Common myeloid progenitor, CD34-positive (primary cell): ENCODE measurements at regions of chr20 and their contacts with region 1.

Region 1: DNA sequence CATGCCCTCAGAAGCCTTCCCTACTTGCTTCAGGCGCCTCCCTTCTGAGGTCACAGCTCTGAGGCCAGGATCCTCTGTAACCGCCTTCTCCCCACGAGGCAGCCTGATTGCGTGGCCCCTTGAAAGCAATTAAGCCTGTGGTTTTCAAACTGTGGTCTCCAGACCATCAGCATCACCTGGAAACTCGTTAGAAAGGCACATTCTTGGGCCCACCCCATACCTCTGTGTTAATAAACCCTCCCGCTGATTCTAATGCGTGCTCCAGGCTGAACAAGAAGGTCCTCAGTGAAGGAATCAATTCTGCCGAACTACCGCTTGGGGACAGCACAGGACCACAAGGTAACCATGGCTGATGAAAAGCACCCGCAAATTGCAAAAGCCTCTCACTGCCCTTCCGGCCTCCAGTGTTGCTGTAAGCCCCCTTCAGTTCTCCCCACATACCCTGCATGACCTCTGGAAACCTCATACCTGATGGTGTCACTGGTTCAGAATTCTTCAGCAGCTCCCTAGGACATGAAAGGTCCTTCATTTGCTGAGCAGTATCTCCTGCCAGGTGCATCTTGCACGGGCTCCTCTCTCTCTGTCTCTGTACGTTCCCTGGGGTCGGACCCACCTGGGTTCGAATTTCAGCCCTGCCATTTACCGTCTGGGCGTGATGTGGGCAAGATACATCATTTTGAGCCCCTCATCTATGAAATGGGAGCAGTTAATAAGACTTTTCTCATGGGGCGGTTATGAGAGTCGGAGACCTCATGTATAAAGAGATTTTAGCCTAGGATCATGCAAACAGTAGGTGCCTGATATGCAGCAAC is 93.3 kb upstream of the RNF24 start:
- DNase-seq: peak; percentile 85 to 93 (median 91)
- H3K4me3 ChIP-seq: no peak overlapping the region
- H3K27ac ChIP-seq: no peak overlapping the region
- H3K4me1 ChIP-seq: peaks cover under 1 to 28% (median 22%) of the 10 kb centered on the region in 4 experiments
- H3K27me3 ChIP-seq: no peaks in the 10 kb centered on the region

Region 2: DNA sequence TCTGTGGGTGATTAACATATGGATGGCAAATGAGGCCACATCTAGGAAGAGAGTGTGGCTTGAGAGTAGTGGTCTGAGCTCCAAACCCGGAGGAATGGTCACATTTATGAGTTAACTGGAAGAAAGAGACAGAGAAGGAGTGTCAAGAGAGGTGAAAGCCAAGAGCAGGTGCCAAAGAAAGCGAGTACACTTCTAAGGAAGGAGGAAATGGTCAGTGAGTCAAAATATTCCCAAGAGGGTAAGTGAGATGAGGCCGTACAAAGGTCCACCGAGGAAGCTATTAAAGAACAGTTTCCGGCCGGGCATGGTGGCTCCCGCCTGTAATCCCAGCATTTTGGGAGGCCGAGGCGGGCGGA is 11.1 kb after region 1 on chr20:
- CTCF ChIA-PET with region 1: interaction called, 11 read pairs
- POLR2A ChIA-PET with region 1: no interaction called
- DNase-seq: no peak
- H3K4me3 ChIP-seq: no peak overlapping the region
- H3K27ac ChIP-seq: no peak overlapping the region
- H3K4me1 ChIP-seq: peaks cover 0 to 21% (median 9%) of the 10 kb centered on the region in 4 experiments
- H3K27me3 ChIP-seq: no peaks in the 10 kb centered on the region

Region 3: DNA sequence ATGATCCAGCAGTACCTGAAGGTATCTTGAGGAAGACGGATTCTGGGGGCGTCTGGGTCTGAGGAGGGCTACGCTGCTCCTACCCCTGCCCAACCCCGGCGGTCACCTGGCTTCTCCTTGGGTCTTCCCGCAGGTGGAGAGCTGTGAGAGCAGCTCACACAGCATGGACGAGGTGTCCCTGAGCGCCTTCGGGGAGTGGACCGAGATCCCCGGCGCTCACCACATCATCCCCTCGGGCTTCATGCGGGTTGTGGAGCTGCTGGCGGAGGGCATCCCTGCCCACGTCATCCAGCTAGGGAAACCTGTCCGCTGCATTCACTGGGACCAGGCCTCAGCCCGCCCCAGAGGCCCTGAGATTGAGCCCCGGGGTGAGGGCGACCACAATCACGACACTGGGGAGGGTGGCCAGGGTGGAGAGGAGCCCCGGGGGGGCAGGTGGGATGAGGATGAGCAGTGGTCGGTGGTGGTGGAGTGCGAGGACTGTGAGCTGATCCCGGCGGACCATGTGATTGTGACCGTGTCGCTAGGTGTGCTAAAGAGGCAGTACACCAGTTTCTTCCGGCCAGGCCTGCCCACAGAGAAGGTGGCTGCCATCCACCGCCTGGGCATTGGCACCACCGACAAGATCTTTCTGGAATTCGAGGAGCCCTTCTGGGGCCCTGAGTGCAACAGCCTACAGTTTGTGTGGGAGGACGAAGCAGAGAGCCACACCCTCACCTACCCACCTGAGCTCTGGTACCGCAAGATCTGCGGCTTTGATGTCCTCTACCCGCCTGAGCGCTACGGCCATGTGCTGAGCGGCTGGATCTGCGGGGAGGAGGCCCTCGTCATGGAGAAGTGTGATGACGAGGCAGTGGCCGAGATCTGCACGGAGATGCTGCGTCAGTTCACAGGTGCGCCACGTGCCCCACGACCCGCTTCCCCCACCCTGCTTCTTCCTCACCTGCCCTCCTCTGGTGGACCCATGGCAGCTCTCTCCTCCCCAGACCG is 73.5 kb after region 1 on chr20:
- CTCF ChIA-PET with region 1: interaction called, 12 read pairs
- POLR2A ChIA-PET with region 1: no interaction called
- DNase-seq: no peak
- H3K4me3 ChIP-seq: no peak overlapping the region
- H3K27ac ChIP-seq: no peak overlapping the region
- H3K4me1 ChIP-seq: no peaks in the 10 kb centered on the region
- H3K27me3 ChIP-seq: no peaks in the 10 kb centered on the region

Region 4: GRCh38 chr20:4217349-4217773 is 108.7 kb after region 1 on chr20:
- CTCF ChIA-PET with region 1: no interaction called
- POLR2A ChIA-PET with region 1: no interaction called
- DNase-seq: no peak
- H3K4me3 ChIP-seq: no peak overlapping the region
- H3K27ac ChIP-seq: no peak overlapping the region
- H3K4me1 ChIP-seq: peaks cover 0 to 11% (median 5%) of the 10 kb centered on the region in 4 experiments
- H3K27me3 ChIP-seq: peaks cover 0 to 9% (median 6%) of the 10 kb centered on the region in 5 experiments

Region 5: DNA sequence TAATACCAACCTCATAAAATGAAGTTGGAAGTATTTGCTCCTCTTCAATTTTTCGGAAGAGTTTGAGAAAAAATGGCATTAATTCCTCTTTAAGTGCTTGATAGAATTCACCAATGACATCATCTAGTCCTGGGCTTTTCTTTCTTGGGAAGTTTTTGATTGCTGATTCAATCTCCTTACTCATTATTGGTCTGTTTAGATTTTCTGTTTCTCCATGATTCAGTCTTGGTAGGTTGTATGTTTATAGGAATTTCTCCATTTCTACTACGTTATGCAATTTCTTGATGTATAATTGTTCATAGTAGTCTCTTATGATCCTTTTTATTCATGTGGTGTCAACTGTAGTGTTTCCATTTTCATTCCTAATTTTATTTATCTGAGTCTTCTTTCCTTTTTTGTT is 436.1 kb after region 1 on chr20:
- CTCF ChIA-PET with region 1: no interaction called
- POLR2A ChIA-PET with region 1: no interaction called
- DNase-seq: no peak
- H3K4me3 ChIP-seq: no peak overlapping the region
- H3K27ac ChIP-seq: no peak overlapping the region
- H3K4me1 ChIP-seq: no peaks in the 10 kb centered on the region
- H3K27me3 ChIP-seq: peaks cover 0 to 5% (median 0%) of the 10 kb centered on the region in 5 experiments

Region 6: GRCh38 chr20:4592316-4593148 is 483.8 kb after region 1 on chr20:
- CTCF ChIA-PET with region 1: interaction called, 19 read pairs
- POLR2A ChIA-PET with region 1: no interaction called
- DNase-seq: peak; percentile 31 to 65 (median 58)
- H3K4me3 ChIP-seq: peak overlapping the region in 6 of 7 experiments; percentile 49 to 82 (median 58)
- H3K27ac ChIP-seq: no peak overlapping the region
- H3K4me1 ChIP-seq: peaks cover 0 to 8% (median 4%) of the 10 kb centered on the region in 4 experiments
- H3K27me3 ChIP-seq: peaks cover 0 to 8% (median 4%) of the 10 kb centered on the region in 5 experiments